Endothelial cell of umbilical vein (primary cell): ENCODE measurements at regions of chr12 and their contacts with region 1.

Region 1: GRCh38 chr12:12872139-12872881 is 19.1 kb upstream of the GPRC5A start:
- DNase-seq: peak; percentile 93
- H3K4me3 ChIP-seq: peak overlapping the region in 1 of 3 experiments; percentile 43
- H3K27ac ChIP-seq: peak overlapping the region; percentile 96
- H3K4me1 ChIP-seq: peaks cover 41% of the 10 kb centered on the region
- H3K27me3 ChIP-seq: no peaks in the 10 kb centered on the region
- CTCF ChIP-seq: no peak
- POLR2A ChIP-seq: peak; percentile 74

Region 2: DNA sequence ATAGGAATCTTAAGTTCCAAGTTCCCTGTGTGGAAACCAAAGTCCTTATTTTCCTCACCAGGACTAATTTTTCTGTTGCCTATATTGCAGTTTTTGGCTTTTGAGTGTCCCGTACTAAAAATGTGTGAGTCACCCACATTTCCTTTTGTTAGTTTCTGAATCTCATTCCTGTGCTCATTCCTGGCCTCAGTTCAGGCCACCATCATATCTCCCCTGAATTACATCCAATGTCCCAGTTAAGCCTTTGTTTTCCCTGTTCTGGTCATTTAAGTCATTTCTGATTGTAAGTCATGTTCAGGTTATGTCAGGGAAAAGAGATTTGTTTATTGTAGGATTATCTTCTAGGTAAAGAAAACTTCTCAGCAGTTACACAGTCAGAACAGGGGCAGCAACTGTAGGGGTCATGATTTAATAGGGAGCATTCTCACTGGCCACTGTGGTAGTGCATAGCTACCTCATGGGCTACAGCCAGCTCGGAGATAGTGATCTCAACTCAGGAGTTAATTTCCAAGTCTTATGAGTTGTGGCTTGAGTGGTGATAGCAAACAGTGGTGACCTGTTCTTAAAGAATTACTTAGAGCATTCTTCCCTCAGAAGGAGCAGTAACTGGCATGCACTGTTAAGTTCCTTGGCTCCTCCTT is 52.5 kb before region 1 on chr12:
- CTCF ChIA-PET with region 1: no interaction called
- POLR2A ChIA-PET with region 1: no interaction called
- dilution Hi-C with region 1: no loop called
- intact Hi-C with region 1: loop called (anchors 1 kb)
- DNase-seq: peak; percentile 85
- H3K4me3 ChIP-seq: peak overlapping the region in 1 of 3 experiments; percentile 15
- H3K27ac ChIP-seq: peak overlapping the region; percentile 93
- H3K4me1 ChIP-seq: peaks cover 49% of the 10 kb centered on the region
- H3K27me3 ChIP-seq: no peaks in the 10 kb centered on the region
- CTCF ChIP-seq: no peak
- POLR2A ChIP-seq: no peak

Region 3: DNA sequence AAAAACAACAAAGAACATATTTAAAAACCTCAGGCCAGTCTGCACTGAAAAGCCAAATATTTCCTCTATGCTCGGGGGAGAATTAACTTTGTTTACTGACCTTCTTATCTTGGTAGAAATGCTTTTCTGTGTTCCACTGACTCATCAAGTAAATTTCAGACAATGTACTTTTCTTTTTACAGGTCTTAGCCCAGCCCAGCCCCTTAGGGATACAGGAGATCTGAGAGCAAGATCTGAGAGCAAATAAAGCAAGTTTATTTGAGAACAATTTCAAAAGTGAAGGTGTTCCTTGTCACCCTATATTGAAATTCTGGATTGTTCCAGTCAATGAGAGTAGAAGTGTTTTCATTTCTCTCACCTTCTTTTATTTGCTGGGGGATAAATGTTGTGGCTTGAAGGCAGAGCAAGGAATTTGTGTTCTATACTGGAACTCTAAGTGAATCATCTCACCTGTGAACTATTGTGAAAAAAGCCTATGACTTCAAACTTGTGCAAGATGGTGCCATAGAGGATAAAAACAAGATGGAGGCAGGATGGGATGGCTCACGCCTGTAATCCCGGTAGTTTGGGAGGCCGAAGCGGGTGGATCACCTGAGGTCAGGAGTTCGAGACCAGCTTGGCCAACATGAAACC is 11.2 kb after region 1 on chr12:
- CTCF ChIA-PET with region 1: no interaction called
- POLR2A ChIA-PET with region 1: interaction called, 3 read pairs
- dilution Hi-C with region 1: no loop called
- intact Hi-C with region 1: loop called (anchors 1 kb)
- DNase-seq: peak; percentile 87
- H3K4me3 ChIP-seq: no peak overlapping the region
- H3K27ac ChIP-seq: peak overlapping the region; percentile 59
- H3K4me1 ChIP-seq: peaks cover 29% of the 10 kb centered on the region
- H3K27me3 ChIP-seq: no peaks in the 10 kb centered on the region
- CTCF ChIP-seq: no peak
- POLR2A ChIP-seq: no peak

Region 4: GRCh38 chr12:12890815-12891645 is 18.7 kb after region 1 on chr12 and contains the start of gene GPRC5A:
- CTCF ChIA-PET with region 1: interaction called, 25 read pairs
- POLR2A ChIA-PET with region 1: interaction called, 15 read pairs
- dilution Hi-C with region 1: no loop called
- intact Hi-C with region 1: loop called (anchors 2 kb)
- DNase-seq: peak; percentile 96
- H3K4me3 ChIP-seq: peak within 1 kb of the TSS; percentile 42 to 55 (median 50)
- H3K27ac ChIP-seq: peak within 1 kb of the TSS; percentile 93
- H3K4me1 ChIP-seq: peaks cover 22% of the 10 kb centered on the region
- H3K27me3 ChIP-seq: no peaks in the 10 kb centered on the region
- CTCF ChIP-seq: peak in 1 of 2 donors; percentile 33
- POLR2A ChIP-seq: peak; percentile 86
- total RNA-seq, gene GPRC5A: 17.6 and 22.7 TPM in 2 replicates

Region 5: GRCh38 chr12:12899530-12900380 is 27.4 kb after region 1 on chr12:
- CTCF ChIA-PET with region 1: interaction called, 5 read pairs
- POLR2A ChIA-PET with region 1: interaction called, 4 read pairs
- dilution Hi-C with region 1: no loop called
- intact Hi-C with region 1: loop called (anchors 1 kb)
- DNase-seq: peak; percentile 81
- H3K4me3 ChIP-seq: no peak overlapping the region
- H3K27ac ChIP-seq: peak overlapping the region; percentile 91
- H3K4me1 ChIP-seq: peaks cover 49% of the 10 kb centered on the region
- H3K27me3 ChIP-seq: no peaks in the 10 kb centered on the region
- CTCF ChIP-seq: no peak
- POLR2A ChIP-seq: no peak

Region 6: DNA sequence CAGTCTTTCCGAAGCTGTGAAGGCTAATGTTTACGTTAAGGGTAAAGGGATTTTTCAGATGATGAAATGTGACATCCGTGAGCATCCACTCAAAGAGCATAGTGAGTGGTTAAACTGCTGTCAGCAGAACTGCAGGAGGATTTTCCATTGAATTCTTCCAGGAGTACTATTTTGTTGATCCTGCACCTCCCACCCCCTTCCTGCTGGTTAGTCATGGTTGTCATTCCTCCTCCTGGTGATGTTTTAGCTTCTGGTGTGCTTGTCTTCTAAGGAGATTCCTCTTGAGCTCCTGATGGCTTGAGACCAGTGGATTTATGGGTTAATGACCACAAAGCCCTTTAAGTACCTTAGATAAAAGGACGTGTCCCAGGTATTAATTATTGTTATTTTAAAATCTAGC is 82.0 kb after region 1 on chr12:
- CTCF ChIA-PET with region 1: no interaction called
- POLR2A ChIA-PET with region 1: no interaction called
- dilution Hi-C with region 1: no loop called
- intact Hi-C with region 1: no loop called
- DNase-seq: peak; percentile 16
- H3K4me3 ChIP-seq: no peak overlapping the region
- H3K27ac ChIP-seq: no peak overlapping the region
- H3K4me1 ChIP-seq: no peaks in the 10 kb centered on the region
- H3K27me3 ChIP-seq: no peaks in the 10 kb centered on the region
- CTCF ChIP-seq: no peak
- POLR2A ChIP-seq: no peak

Region 7: DNA sequence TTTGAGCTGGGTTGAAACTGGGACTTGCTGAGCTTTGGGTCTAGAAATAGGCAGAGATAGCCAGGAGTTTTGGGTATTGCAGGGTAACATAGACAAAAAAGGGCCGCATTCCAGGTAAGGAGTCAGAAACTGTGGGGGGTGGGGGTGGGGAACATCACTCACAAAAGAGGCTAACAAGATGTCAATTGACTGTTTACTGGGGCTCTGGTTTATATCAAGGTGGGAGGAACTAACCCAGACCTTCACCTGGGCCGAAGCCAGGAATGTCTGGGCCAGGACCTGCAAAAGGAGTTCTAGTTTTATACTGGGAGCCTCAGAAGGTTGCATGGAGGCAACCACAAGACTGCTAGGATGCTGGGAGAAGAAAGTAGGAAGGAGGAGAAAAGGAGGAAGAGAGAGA is 478.6 kb after region 1 on chr12:
- CTCF ChIA-PET with region 1: no interaction called
- POLR2A ChIA-PET with region 1: no interaction called
- dilution Hi-C with region 1: no loop called
- intact Hi-C with region 1: no loop called
- DNase-seq: no peak
- H3K4me3 ChIP-seq: no peak overlapping the region
- H3K27ac ChIP-seq: no peak overlapping the region
- H3K4me1 ChIP-seq: no peaks in the 10 kb centered on the region
- H3K27me3 ChIP-seq: peaks cover 4 to 5% of the 10 kb centered on the region in 2 experiments
- CTCF ChIP-seq: no peak
- POLR2A ChIP-seq: no peak